WTC11 (cell line): ENCODE measurements at regions of chr7 and their contacts with region 1.

Region 1: DNA sequence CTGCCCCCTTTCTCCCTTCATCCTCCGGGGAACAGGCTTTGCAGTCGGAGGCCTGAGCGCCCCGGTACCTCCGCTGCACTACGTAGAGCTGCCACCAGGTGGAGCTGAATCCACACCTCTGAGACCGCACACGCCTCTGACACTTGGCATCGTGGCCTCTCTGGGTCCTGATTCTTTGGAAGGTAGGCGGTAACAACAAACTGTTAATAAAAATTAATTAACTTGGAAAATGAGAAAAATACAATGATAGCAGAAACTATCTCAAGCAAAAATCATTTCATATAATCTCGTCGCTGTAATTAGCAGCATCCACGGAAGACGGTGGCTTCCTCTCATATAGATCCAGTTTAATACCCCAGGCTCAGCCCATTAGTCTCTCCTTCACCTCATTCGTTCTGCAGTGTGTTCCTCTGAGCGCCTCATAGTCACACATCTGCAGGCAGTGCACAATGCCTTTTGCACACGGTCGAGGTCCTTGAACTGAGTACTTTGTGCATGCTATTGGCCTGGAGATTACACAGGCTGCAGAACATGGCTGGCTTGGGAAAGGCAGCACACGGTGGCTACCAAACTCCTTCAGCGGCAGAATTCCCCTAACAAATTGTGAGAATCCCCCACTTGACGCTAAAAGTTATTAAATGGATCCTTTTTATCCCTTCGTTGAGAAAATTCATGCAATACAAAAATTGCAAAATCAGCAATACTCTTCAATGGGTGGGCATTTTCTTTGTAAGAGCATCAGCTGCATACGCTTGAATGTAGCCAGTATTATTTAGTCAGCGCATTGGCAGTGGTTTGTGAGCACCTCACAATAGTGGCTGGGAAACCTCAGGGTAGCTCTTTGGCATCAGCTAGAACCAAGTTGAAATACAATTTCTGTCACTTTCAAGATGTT is 18.7 kb downstream of the OR9A2 start:
- DNase-seq: peak; percentile 88
- ATAC-seq: peak; percentile 96
- H3K4me3 Mint-ChIP-seq: no peak overlapping the region
- H3K27ac Mint-ChIP-seq: no peak overlapping the region
- H3K4me1 Mint-ChIP-seq: peaks cover 4% of the 10 kb centered on the region
- H3K27me3 Mint-ChIP-seq: peaks cover 11% of the 10 kb centered on the region
- CTCF ChIP-seq: peak; percentile 95

Region 2: GRCh38 chr7:142632291-142633134 is 375.7 kb before region 1 on chr7:
- CTCF ChIA-PET with region 1: interaction called, 11 read pairs
- POLR2A ChIA-PET with region 1: no interaction called
- DNase-seq: peak; percentile 71
- ATAC-seq: peak; percentile 98
- H3K4me3 Mint-ChIP-seq: no peak overlapping the region
- H3K27ac Mint-ChIP-seq: no peak overlapping the region
- H3K4me1 Mint-ChIP-seq: peaks cover 2% of the 10 kb centered on the region; the same call in 1 of the 2 replicates
- H3K27me3 Mint-ChIP-seq: peaks cover 13% of the 10 kb centered on the region
- CTCF ChIP-seq: peak; percentile 63

Region 3: GRCh38 chr7:142771353-142771723 is 236.9 kb before region 1 on chr7:
- CTCF ChIA-PET with region 1: no interaction called
- POLR2A ChIA-PET with region 1: no interaction called
- DNase-seq: no peak
- ATAC-seq: no peak
- H3K4me3 Mint-ChIP-seq: no peak overlapping the region
- H3K27ac Mint-ChIP-seq: no peak overlapping the region
- H3K4me1 Mint-ChIP-seq: peaks cover 7% of the 10 kb centered on the region; the same call in 1 of the 2 replicates
- H3K27me3 Mint-ChIP-seq: peaks cover 3% of the 10 kb centered on the region
- CTCF ChIP-seq: no peak

Region 4: GRCh38 chr7:142853739-142854371 is 154.4 kb before region 1 on chr7:
- CTCF ChIA-PET with region 1: interaction called, 21 read pairs
- POLR2A ChIA-PET with region 1: no interaction called
- DNase-seq: peak; percentile 70
- ATAC-seq: peak; percentile 69
- H3K4me3 Mint-ChIP-seq: peak overlapping the region; percentile 94
- H3K27ac Mint-ChIP-seq: no peak overlapping the region
- H3K4me1 Mint-ChIP-seq: peaks cover 29% of the 10 kb centered on the region
- H3K27me3 Mint-ChIP-seq: peaks cover 17% of the 10 kb centered on the region
- CTCF ChIP-seq: no peak

Region 5: DNA sequence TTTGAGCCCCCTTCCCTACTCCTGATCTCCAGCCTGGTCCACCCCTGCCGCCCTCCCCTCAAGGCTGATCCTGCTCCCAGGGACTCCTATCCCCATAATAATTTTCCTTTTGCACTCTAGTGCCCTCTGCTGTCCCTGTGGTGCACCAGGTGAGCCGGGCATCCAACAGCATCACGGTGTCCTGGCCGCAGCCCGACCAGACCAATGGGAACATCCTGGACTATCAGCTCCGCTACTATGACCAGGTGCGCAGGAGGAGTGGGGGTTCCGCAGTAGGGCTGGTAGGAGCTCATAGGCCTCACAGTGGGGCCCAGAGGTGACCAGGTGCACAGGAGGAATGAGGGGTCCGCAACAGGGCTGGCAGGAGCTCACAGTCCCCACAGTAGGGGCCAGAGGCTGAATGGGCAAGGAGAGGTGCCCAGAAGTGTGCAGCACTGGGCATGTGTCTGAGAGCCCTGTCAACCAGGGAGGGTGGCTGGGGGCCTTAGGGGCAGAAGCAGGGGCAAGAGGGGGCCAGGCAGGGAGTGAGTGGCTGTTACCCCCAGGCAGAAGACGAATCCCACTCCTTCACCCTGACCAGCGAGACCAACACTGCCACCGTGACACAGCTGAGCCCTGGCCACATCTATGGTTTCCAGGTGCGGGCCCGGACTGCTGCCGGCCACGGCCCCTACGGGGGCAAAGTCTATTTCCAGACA is 141.7 kb before region 1 on chr7:
- CTCF ChIA-PET with region 1: interaction called, 34 read pairs
- POLR2A ChIA-PET with region 1: no interaction called
- DNase-seq: peak; percentile 80
- ATAC-seq: peak; percentile 92
- H3K4me3 Mint-ChIP-seq: no peak overlapping the region
- H3K27ac Mint-ChIP-seq: no peak overlapping the region
- H3K4me1 Mint-ChIP-seq: peaks cover 39% of the 10 kb centered on the region
- H3K27me3 Mint-ChIP-seq: no peaks in the 10 kb centered on the region; the same call in none of the 2 replicates
- CTCF ChIP-seq: peak; percentile 39; the same call in 1 of the 2 replicates

Region 6: DNA sequence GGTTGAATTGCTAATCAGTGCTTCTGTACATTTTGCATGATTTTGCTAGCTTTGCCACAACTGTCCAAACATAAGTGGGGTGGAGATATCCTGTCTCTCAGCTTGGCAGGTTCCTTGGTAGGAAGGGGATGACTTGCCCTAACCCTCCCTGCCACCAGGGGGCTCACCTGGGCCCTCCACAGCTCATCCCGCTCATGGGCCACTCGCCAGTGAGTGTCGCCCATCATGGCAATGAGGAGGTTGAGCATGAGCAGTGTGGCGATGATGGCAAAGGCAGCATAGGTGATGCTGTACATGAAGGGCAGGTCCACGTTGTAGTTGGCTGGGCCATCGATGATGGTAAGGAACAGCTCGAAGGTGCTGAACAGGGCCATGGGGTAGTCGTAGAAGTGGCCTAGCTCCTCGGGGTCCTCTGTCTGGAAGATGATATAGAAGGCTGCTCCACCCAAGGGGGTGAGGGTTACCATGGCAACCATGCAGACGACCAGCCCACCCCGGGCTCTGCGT is 134.9 kb before region 1 on chr7:
- CTCF ChIA-PET with region 1: interaction called, 34 read pairs
- POLR2A ChIA-PET with region 1: no interaction called
- DNase-seq: peak; percentile 69
- ATAC-seq: peak; percentile 88
- H3K4me3 Mint-ChIP-seq: no peak overlapping the region
- H3K27ac Mint-ChIP-seq: no peak overlapping the region
- H3K4me1 Mint-ChIP-seq: no peaks in the 10 kb centered on the region
- H3K27me3 Mint-ChIP-seq: no peaks in the 10 kb centered on the region
- CTCF ChIP-seq: peak; percentile 90

Region 7: DNA sequence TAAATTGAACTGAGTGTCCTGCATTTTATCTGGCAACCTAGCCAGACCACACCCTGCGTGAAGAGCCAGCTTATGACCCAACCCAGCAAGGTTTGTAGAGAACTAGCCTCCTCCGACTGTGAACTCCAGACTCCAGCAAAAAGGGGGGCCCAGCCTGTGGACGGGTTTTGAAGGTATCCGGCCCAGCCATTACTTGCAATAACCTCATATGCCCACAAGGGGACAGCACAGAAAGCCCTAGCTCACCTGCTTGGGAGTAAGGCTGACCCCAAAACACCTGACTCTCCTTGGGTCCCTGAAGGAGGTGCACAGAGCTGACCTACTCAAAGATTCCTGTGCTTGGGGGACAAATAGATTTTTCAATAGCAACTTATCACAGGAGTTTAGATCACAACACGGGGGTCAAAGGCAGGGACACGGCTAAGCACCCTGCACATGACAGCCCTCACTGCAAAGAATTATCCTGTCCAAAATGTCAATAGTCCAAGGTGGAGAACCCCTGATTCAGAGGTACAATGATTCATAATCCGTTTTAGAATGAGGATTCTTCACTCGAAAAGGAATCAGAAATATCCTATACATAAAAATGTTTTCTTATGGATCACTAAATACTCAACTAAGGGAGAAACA is 127.3 kb before region 1 on chr7:
- CTCF ChIA-PET with region 1: interaction called, 30 read pairs
- POLR2A ChIA-PET with region 1: no interaction called
- DNase-seq: peak; percentile 72
- ATAC-seq: peak; percentile 72
- H3K4me3 Mint-ChIP-seq: no peak overlapping the region
- H3K27ac Mint-ChIP-seq: no peak overlapping the region
- H3K4me1 Mint-ChIP-seq: peaks cover 6% of the 10 kb centered on the region
- H3K27me3 Mint-ChIP-seq: no peaks in the 10 kb centered on the region; the same call in 1 of the 2 replicates
- CTCF ChIP-seq: peak; percentile 96

Region 8: DNA sequence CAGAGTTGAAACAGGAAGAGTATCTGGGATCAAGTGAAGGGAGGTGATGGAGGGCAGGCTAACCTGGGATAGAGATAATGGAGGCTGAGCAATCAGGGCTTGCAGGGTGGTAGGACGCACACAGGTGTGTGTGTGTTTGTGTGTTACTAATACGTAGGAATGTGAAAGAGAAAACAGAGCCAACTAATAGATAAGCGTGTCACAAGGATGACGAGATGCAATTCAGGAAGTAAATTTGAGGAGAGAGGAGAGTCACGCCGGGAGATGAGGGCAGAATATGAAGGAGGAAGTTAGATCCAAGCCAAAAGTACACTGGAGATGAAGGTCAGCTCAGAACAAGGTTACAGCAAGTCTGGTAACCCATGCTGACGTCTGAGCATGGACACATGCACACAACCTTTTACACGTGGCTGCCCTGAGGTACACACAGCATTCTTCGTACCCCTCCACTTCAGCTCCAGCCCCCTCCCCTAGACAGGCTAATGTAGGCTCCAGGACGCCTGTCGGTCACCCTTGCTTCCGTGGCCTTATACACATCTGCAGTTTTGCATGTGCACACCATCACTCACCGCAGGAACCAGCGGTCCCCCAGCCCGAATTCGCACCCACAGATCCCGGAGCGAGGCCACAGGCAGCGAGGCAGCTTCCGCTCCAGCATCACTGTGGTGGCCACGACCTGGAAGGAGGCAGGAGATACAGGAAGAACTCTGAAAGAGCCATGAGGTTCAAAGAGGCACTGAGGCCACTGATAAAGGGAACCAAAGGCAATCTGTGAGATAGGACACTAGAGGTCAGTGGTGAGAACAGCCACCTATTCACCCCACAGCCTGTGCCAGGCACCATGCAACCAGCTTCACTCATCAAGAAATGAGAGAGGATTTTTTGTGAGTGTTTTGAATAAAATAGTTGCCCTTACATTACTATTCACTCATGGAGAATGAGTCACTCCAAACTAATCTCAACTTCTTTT is 99.0 kb before region 1 on chr7:
- CTCF ChIA-PET with region 1: interaction called, 11 read pairs
- POLR2A ChIA-PET with region 1: no interaction called
- DNase-seq: no peak
- ATAC-seq: peak; percentile 98
- H3K4me3 Mint-ChIP-seq: no peak overlapping the region
- H3K27ac Mint-ChIP-seq: no peak overlapping the region
- H3K4me1 Mint-ChIP-seq: 0 out of 2 replicates have a peak, but pooled peaks cover 2% of the 10 kb centered on the region
- H3K27me3 Mint-ChIP-seq: peaks cover 3% of the 10 kb centered on the region; the same call in 1 of the 2 replicates
- CTCF ChIP-seq: no peak

Region 9: GRCh38 chr7:143914938-143915652 is 906.8 kb after region 1 on chr7:
- CTCF ChIA-PET with region 1: no interaction called
- POLR2A ChIA-PET with region 1: no interaction called
- DNase-seq: no peak
- ATAC-seq: no peak
- H3K4me3 Mint-ChIP-seq: no peak overlapping the region
- H3K27ac Mint-ChIP-seq: no peak overlapping the region
- H3K4me1 Mint-ChIP-seq: no peaks in the 10 kb centered on the region
- H3K27me3 Mint-ChIP-seq: no peaks in the 10 kb centered on the region
- CTCF ChIP-seq: no peak